GM18951 (cell line): ENCODE measurements at regions of chr6 and their contacts with region 1.

Region 1: GRCh38 chr6:138240476-138241245 is 22.4 kb upstream of the PBOV1 start:
- POLR2A ChIP-seq: no peak

Region 2: GRCh38 chr6:138387597-138388368 is 147.1 kb after region 1 on chr6:
- in situ Hi-C with region 1: loop called (anchors 10 kb)
- POLR2A ChIP-seq: no peak

Region 3: DNA sequence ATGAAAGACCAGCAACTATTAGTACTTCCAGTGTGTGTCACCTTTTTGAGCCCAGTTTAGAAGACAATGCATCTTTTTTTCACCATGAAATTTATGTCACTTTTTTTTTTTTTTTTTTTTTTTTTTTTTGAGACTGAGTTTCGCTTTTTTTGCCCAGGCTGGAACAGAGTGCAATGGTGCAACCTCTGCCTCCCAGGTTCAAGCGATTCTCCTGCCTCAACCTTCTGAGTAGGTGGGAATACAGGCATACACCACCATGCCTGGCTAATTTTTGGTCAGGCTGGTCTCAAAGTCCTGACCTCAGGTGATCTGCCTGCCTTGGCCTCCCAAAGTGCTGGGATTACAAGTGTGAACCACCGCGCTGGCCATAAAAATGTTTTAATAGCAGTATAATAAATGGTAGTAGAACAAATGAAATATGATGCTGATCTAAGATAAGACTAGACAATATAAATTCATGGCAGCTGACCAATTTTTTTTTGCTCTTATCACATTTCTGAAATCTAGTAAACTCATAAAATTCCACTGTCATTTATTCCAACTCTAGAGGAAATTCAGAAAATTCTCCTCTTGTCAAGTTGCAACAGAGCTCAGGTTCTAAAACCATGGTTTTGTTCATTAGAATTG is 237.4 kb after region 1 on chr6:
- in situ Hi-C with region 1: no loop called
- POLR2A ChIP-seq: no peak